ENCODE measurements at regions of chr1 and their contacts with region 1.

Region 1: DNA sequence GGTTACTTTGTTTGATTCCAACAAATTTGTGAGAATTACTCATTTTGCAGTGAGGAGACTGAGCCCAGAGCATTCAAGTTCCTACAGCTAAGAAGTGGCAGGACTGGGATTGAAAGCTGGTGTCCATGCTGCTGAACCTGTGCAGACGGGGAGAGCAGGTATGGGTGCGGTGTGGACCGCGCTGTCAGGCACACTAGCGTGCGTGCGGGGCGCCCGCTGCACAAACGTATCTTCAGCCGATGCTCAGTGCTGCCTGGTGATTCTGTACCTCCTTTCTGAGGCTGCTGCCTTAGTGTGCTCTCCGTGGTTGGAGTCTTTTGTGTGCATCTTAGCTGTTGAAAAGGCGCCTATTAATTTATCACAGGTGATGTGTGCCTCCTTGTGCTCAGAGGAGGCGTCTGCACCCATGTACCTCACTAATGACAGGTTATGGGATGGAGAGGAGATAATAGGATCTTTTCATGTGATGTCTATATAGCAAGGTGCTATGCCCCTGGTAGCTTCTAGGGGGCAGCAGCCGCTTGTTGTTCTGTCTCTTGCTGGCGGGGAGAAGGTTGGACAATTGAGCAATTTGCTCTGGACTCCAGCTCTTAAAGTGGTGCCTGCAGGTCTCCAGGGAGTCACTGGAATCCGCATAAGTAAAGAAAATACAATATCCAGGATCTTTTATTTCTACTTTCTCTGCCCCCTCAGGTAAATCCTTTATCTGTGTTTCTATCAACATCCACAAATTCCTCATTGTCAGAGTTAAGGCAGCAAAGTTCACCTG is 32.5 kb downstream of the PEX14 start:
- DNase-seq: peak; percentile 31 to 72 (median 39)
- H3K4me3 ChIP-seq: no peak overlapping the region
- H3K4me3 Mint-ChIP-seq: peak overlapping the region in 2 of 7 donors; percentile 34 to 83
- H3K27ac ChIP-seq: no peak overlapping the region
- H3K27ac Mint-ChIP-seq: peak overlapping the region in 7 of 8 donors; percentile 48 to 89 (median 86)
- H3K4me1 ChIP-seq: peaks cover 42% of the 10 kb centered on the region
- H3K4me1 Mint-ChIP-seq: peaks cover 36 to 60% (median 47%) of the 10 kb centered on the region in 3 donors
- H3K27me3 ChIP-seq: no peaks in the 10 kb centered on the region
- H3K27me3 Mint-ChIP-seq: no peaks in the 10 kb centered on the region

Region 2: GRCh38 chr1:10522322-10522860 is 15.1 kb after region 1 on chr1:
- CTCF ChIA-PET with region 1: interaction called, 19 read pairs
- POLR2A ChIA-PET with region 1: interaction called, 7 read pairs
- DNase-seq: no peak
- H3K4me3 ChIP-seq: no peak overlapping the region
- H3K4me3 Mint-ChIP-seq: peak overlapping the region in 1 of 7 donors; percentile 20
- H3K27ac ChIP-seq: no peak overlapping the region
- H3K27ac Mint-ChIP-seq: peak overlapping the region in 7 of 8 donors; percentile 2 to 77 (median 60)
- H3K4me1 ChIP-seq: peaks cover 15% of the 10 kb centered on the region
- H3K4me1 Mint-ChIP-seq: peaks cover 44 to 76% (median 60%) of the 10 kb centered on the region in 3 donors
- H3K27me3 ChIP-seq: no peaks in the 10 kb centered on the region
- H3K27me3 Mint-ChIP-seq: no peaks in the 10 kb centered on the region

Region 3: GRCh38 chr1:10755970-10756521 is 248.8 kb after region 1 on chr1:
- CTCF ChIA-PET with region 1: no interaction called
- POLR2A ChIA-PET with region 1: no interaction called
- DNase-seq: peak; percentile 41 to 72 (median 58)
- H3K4me3 ChIP-seq: no peak overlapping the region
- H3K4me3 Mint-ChIP-seq: peak overlapping the region in 1 of 7 donors; percentile 20
- H3K27ac ChIP-seq: no peak overlapping the region
- H3K27ac Mint-ChIP-seq: peak overlapping the region in 1 of 8 donors; percentile 47
- H3K4me1 ChIP-seq: peaks cover 9% of the 10 kb centered on the region
- H3K4me1 Mint-ChIP-seq: peaks cover 0 to 16% (median 6%) of the 10 kb centered on the region in 3 donors
- H3K27me3 ChIP-seq: peaks cover 5% of the 10 kb centered on the region
- H3K27me3 Mint-ChIP-seq: peaks cover 2 to 3% of the 10 kb centered on the region in 2 donors

Region 4: DNA sequence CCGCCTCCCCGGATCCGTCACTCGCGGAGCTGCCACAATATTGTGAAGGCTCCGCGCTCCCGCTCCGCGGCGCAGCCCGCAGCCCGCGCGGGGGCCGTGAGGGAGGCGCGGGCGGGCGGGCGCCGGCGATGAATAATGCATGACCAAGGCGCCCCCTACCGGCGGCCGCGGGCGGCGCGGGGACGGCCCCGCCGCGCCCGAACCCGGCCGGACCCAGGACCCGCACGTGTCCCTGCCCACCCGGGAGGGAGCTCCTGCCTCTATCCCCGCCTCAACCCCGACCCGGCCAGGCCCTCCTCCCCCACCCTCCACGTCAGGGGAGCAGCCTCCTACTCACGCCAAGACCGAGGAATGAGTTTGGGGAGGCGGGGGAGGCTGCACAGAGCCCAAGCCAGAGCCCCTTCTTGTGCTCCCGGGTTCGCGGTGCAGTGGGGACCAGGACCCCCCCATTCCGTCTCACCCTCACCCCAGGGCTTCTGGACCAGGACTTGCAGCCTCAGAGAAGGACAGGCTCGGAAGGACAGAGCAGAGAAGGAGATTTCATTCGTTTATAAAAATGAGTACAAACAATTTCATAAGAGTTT is 359.9 kb after region 1 on chr1:
- CTCF ChIA-PET with region 1: interaction called, 29 read pairs
- POLR2A ChIA-PET with region 1: no interaction called
- DNase-seq: peak; percentile 55 to 74 (median 59)
- H3K4me3 ChIP-seq: peak overlapping the region; percentile 20
- H3K4me3 Mint-ChIP-seq: peak overlapping the region in 6 of 7 donors; percentile 15 to 46 (median 36)
- H3K27ac ChIP-seq: no peak overlapping the region
- H3K27ac Mint-ChIP-seq: peak overlapping the region in 1 of 8 donors; percentile 69
- H3K4me1 ChIP-seq: peaks cover 6% of the 10 kb centered on the region
- H3K4me1 Mint-ChIP-seq: peaks cover 7 to 21% (median 16%) of the 10 kb centered on the region in 3 donors
- H3K27me3 ChIP-seq: peaks cover 33% of the 10 kb centered on the region
- H3K27me3 Mint-ChIP-seq: peaks cover 26 to 67% of the 10 kb centered on the region in 2 donors

Measured in CD8-positive, alpha-beta memory T cell (primary cell).